B cell (primary cell): ENCODE measurements at regions of chr16 and their contacts with region 1.

Region 1: GRCh38 chr16:19113453-19114351 is at the start of gene ITPRIPL2:
- DNase-seq: peak; percentile 54
- ATAC-seq: peak; percentile 41
- H3K4me3 ChIP-seq: peak within 1 kb of the TSS in 4 of 5 experiments; percentile 28 to 53 (median 43)
- H3K4me3 Mint-ChIP-seq: peak within 1 kb of the TSS; percentile 86
- H3K27ac ChIP-seq: no peak within 1 kb of the TSS
- H3K27ac Mint-ChIP-seq: peak within 1 kb of the TSS; percentile 84
- H3K4me1 ChIP-seq: peaks cover 20 to 30% of the 10 kb centered on the region in 2 donors
- H3K4me1 Mint-ChIP-seq: peaks cover 38% of the 10 kb centered on the region
- H3K27me3 ChIP-seq: peaks cover 0 to 12% (median 0%) of the 10 kb centered on the region in 4 experiments
- H3K27me3 Mint-ChIP-seq: peaks cover 13% of the 10 kb centered on the region
- CTCF ChIP-seq: no peak
- total RNA-seq, gene ITPRIPL2: 14.6 and 15.4 TPM in 2 replicates

Region 2: GRCh38 chr16:19067349-19068236 is 46.1 kb before region 1 on chr16 and contains the start of gene COQ7:
- CTCF ChIA-PET with region 1: no interaction called
- POLR2A ChIA-PET with region 1: no interaction called
- intact Hi-C with region 1: no loop called
- DNase-seq: peak; percentile 100
- ATAC-seq: peak; percentile 90
- H3K4me3 ChIP-seq: peak within 1 kb of the TSS; percentile 78 to 91 (median 79)
- H3K4me3 Mint-ChIP-seq: peak within 1 kb of the TSS; percentile 91
- H3K27ac ChIP-seq: peak within 1 kb of the TSS; percentile 99 to 100
- H3K27ac Mint-ChIP-seq: peak within 1 kb of the TSS; percentile 99
- H3K4me1 ChIP-seq: peaks cover 8 to 14% of the 10 kb centered on the region in 2 donors
- H3K4me1 Mint-ChIP-seq: peaks cover 14% of the 10 kb centered on the region
- H3K27me3 ChIP-seq: no peaks in the 10 kb centered on the region
- H3K27me3 Mint-ChIP-seq: peaks cover 8% of the 10 kb centered on the region
- CTCF ChIP-seq: no peak
- total RNA-seq, gene COQ7: 19.4 and 19.5 TPM in 2 replicates

Region 3: DNA sequence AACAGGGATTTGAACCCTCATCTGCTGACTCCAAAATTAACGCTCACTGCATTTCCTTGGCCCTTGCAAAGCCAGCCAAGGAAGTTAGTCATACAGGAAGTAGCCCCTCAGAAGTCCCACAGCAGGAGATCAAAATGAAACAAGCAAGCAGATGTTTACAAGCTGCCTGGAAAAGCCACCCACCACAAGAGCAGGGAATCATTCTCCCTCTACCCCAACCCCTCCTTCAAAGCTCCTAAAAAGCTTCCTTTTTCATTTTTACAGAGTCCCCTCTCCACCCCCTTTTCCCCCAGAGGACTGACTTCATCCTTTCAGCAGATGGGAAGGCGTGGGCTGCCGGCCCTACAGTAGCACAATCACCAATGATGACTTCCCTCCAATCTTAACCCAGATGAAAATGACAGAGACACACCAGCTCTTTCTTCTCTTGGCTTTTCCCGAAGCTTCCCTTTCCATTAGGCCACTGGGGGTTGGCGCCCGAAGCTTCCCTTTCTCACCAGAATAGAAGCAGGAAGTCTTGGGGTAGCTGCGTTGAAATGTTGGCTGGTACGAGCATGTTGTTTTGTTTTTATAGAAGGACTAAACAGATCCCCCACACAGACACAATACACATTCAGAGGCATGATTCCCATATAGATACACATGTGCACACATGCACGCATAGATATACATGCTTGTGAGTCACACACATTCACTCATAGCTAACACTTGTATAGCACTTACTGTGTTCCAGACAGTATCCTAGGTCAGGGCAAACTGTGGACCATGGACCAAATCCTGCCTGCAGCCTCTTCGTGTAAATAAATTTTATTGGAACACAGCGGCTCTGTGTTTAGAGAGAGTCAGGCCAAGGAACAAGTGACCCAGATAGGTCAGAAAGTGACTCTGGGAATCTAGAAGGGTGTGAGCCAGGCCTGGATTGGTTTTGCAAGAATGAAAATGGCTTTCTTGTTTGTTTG is 17.4 kb after region 1 on chr16:
- CTCF ChIA-PET with region 1: interaction called, 4 read pairs
- POLR2A ChIA-PET with region 1: interaction called, 4 read pairs
- intact Hi-C with region 1: loop called (anchors 2 kb)
- DNase-seq: no peak
- ATAC-seq: peak; percentile 22
- H3K4me3 ChIP-seq: peak overlapping the region in 1 of 5 experiments; percentile 27
- H3K4me3 Mint-ChIP-seq: peak overlapping the region; percentile 36
- H3K27ac ChIP-seq: no peak overlapping the region
- H3K27ac Mint-ChIP-seq: peak overlapping the region; percentile 29
- H3K4me1 ChIP-seq: peaks cover 7 to 26% of the 10 kb centered on the region in 2 donors
- H3K4me1 Mint-ChIP-seq: peaks cover 46% of the 10 kb centered on the region
- H3K27me3 ChIP-seq: no peaks in the 10 kb centered on the region
- H3K27me3 Mint-ChIP-seq: no peaks in the 10 kb centered on the region
- CTCF ChIP-seq: no peak

Region 4: GRCh38 chr16:19153876-19154275 is 40.2 kb after region 1 on chr16:
- CTCF ChIA-PET with region 1: no interaction called
- POLR2A ChIA-PET with region 1: no interaction called
- intact Hi-C with region 1: no loop called
- DNase-seq: no peak
- ATAC-seq: no peak
- H3K4me3 ChIP-seq: no peak overlapping the region
- H3K4me3 Mint-ChIP-seq: no peak overlapping the region
- H3K27ac ChIP-seq: no peak overlapping the region
- H3K27ac Mint-ChIP-seq: no peak overlapping the region
- H3K4me1 ChIP-seq: no peaks in the 10 kb centered on the region
- H3K4me1 Mint-ChIP-seq: no peaks in the 10 kb centered on the region
- H3K27me3 ChIP-seq: peaks cover 0 to 3% (median 0%) of the 10 kb centered on the region in 4 experiments
- H3K27me3 Mint-ChIP-seq: peaks cover 13% of the 10 kb centered on the region
- CTCF ChIP-seq: no peak